Caco-2 (cell line): ENCODE measurements at regions of chr17 and their contacts with region 1.

Region 1: DNA sequence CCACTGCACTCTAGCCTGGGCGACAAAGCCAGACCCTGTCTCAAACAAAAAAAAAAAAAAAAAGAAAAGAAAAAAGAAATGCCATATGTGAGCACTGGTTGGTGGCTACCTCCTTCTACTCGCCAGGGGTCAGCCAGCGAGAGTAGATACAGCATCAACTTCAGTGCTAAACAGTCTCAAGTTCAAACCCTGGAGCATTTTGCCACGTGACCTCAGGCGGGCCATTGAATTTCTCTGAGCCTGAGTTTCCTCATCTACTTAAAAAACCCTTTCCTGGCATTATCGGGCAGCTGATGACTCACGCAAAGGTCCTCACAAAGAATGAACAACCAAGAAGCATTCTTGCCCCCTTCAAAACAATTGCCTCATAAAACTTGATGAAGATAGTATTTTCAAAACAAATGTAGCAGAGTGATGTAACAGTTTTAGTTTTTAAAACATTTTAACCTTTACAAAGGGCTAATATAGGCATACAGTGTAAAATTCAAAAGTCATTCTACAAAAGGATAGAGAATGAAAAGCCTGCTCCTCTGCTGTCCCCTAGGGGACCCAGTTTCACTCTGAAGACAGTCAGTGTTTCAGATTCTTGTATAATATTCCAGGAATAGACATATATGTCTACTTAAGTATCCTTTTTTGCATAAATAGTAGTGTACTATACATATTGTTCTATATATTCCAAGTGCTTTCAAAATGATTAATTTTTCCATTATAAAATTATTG is 28.4 kb downstream of the DNAH2 start:
- DNase-seq: no peak
- H3K4me3 ChIP-seq: no peak overlapping the region
- H3K4me3 Mint-ChIP-seq: no peak overlapping the region
- H3K27ac Mint-ChIP-seq: no peak overlapping the region
- H3K4me1 ChIP-seq: peaks cover 3% of the 10 kb centered on the region; the same call in 1 of the 2 replicates
- H3K4me1 Mint-ChIP-seq: peaks cover 8% of the 10 kb centered on the region
- H3K27me3 ChIP-seq: no peaks in the 10 kb centered on the region
- H3K27me3 Mint-ChIP-seq: peaks cover under 1% of the 10 kb centered on the region
- CTCF ChIP-seq: no peak

Region 2: GRCh38 chr17:7782237-7782636 is 36.3 kb after region 1 on chr17:
- CTCF ChIA-PET with region 1: interaction called, 17 read pairs
- POLR2A ChIA-PET with region 1: no interaction called
- intact Hi-C with region 1: loop called (anchors 1 kb)
- DNase-seq: no peak
- H3K4me3 ChIP-seq: no peak overlapping the region
- H3K4me3 Mint-ChIP-seq: no peak overlapping the region
- H3K27ac Mint-ChIP-seq: no peak overlapping the region
- H3K4me1 ChIP-seq: peaks cover 6% of the 10 kb centered on the region
- H3K4me1 Mint-ChIP-seq: no peaks in the 10 kb centered on the region
- H3K27me3 ChIP-seq: no peaks in the 10 kb centered on the region
- H3K27me3 Mint-ChIP-seq: no peaks in the 10 kb centered on the region
- CTCF ChIP-seq: no peak

Region 3: GRCh38 chr17:7823581-7824397 is 77.9 kb after region 1 on chr17:
- CTCF ChIA-PET with region 1: interaction called, 5 read pairs
- POLR2A ChIA-PET with region 1: no interaction called
- intact Hi-C with region 1: loop called (anchors 1 kb)
- DNase-seq: no peak
- H3K4me3 ChIP-seq: no peak overlapping the region
- H3K4me3 Mint-ChIP-seq: no peak overlapping the region
- H3K27ac Mint-ChIP-seq: no peak overlapping the region
- H3K4me1 ChIP-seq: no peaks in the 10 kb centered on the region
- H3K4me1 Mint-ChIP-seq: peaks cover 10% of the 10 kb centered on the region
- H3K27me3 ChIP-seq: no peaks in the 10 kb centered on the region
- H3K27me3 Mint-ChIP-seq: no peaks in the 10 kb centered on the region
- CTCF ChIP-seq: no peak

Region 4: GRCh38 chr17:7844292-7845154 is 98.6 kb after region 1 on chr17:
- CTCF ChIA-PET with region 1: interaction called, 6 read pairs
- POLR2A ChIA-PET with region 1: interaction called, 3 read pairs
- intact Hi-C with region 1: loop called (anchors 2 kb)
- DNase-seq: peak; percentile 88
- H3K4me3 ChIP-seq: peak overlapping the region; percentile 68
- H3K4me3 Mint-ChIP-seq: peak overlapping the region; percentile 82
- H3K27ac Mint-ChIP-seq: peak overlapping the region; percentile 98
- H3K4me1 ChIP-seq: peaks cover 18% of the 10 kb centered on the region
- H3K4me1 Mint-ChIP-seq: peaks cover 12% of the 10 kb centered on the region
- H3K27me3 ChIP-seq: no peaks in the 10 kb centered on the region
- H3K27me3 Mint-ChIP-seq: no peaks in the 10 kb centered on the region
- CTCF ChIP-seq: no peak

Region 5: DNA sequence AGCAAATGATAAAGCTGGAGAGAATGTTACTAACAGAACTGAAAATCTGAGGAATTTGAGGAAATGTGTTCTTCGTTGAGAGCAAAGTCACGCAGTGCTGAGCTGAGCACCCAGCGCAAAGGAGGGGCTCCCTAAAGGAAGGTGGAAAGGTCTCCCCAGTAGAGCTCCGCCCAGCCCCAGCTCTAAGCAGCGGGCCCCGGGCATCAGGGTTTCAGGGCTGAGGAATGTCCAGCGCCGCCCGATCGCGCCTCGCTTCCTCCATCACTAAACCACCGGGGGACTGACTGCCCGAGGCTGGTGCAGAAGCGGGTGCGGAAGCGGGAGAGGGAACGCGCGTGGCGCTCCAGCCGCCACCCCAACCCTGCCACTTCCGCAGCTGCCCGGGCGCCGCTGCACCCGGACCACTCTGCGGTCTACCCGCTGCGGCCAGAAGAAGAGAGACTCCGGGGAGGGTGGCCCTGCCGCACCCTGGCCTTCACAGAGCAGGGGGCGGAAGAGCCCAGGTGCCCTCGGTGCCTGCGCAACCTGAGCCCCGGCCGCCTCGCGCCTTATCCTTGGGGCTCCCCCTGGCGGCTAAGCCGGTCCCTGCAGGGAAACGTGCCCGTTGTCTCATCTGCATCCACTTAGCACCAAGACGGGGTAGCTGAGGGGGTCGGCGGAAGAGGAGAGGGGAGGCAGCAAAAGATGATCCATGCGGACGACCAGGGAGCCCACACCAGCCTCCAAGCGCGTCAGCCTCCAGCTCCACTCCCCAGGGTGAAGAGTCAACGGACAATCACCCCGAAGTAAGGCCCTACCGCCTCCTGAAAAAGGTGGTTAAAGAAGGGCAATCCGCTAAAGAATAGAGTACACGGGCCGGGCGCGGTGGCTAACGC is 244.1 kb after region 1 on chr17:
- CTCF ChIA-PET with region 1: interaction called, 11 read pairs
- POLR2A ChIA-PET with region 1: no interaction called
- intact Hi-C with region 1: loop called (anchors 10 kb)
- DNase-seq: peak; percentile 66 to 88
- H3K4me3 ChIP-seq: peak overlapping the region; percentile 57
- H3K4me3 Mint-ChIP-seq: peak overlapping the region; percentile 61
- H3K27ac Mint-ChIP-seq: no peak overlapping the region
- H3K4me1 ChIP-seq: no peaks in the 10 kb centered on the region
- H3K4me1 Mint-ChIP-seq: no peaks in the 10 kb centered on the region
- H3K27me3 ChIP-seq: no peaks in the 10 kb centered on the region
- H3K27me3 Mint-ChIP-seq: no peaks in the 10 kb centered on the region
- CTCF ChIP-seq: peak; percentile 75 to 80